HEK293 (cell line): ENCODE measurements at regions of chr11 and their contacts with region 1.

Region 1: DNA sequence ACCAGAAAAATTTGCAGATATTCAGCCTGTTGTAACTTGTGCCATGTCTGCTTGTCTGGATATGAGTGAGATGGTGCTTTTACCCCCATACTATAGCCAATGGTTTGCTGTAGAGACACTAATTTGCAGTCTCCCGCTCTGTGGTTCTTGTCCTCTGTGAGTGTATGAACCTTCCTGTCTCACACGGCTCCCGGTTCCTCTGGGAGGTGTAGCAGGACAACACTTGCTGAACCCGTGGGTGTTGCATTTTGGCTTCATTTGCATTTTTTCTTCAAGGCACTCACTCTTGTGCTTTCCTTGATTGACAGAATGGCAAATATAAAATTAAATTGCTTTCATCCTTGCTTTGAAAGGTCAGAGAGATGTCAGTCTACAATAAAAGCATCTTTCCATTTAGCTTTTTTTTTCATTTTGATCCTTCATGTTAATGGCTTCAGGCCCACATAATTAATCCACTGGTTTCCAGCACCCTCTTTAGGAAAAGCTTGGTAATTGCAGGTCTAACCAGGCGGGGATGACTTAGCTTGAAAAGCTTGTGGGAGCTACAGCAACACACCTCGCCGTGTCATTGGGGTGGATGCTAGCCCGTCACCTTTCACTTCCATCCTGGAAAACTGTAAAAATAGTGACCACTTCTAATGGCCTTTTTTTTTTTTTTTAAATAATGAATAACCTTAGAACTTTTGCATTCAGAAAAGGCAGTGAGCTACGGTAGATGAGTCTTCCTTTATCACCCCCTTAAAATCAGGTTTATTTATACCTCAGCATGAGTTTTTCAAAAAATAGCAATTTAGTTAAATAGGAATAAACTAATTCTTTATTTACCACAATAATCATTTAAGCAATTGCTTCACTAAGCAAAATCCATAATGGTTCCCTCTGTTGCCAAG is 27.4 kb upstream of the ST14 start:
- H3K4me3 ChIP-seq: no peak overlapping the region
- H3K27ac ChIP-seq: no peak overlapping the region
- H3K4me1 ChIP-seq: no peaks in the 10 kb centered on the region
- CTCF ChIP-seq: peak; percentile 32; the same call in 1 of the 2 replicates

Region 2: DNA sequence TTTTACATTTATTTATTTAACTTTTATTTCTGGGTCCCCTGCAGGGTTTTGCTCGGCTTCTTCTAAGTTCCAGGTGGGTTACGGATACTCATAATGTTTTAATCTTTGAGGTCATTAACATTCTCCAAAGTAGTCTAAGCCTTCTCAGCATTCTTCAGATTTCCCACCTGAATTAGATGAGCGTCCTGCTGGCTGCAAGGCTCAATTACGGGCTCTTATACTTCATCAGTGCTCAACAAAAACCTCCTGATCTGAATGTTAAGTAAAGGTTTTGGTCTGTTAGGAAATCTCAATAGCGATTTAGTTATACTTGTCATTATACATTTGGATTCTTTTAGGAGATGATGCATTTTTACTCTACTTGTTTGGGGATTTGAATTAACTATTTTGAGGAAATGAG is 209.5 kb before region 1 on chr11:
- CTCF ChIA-PET with region 1: interaction called, 118 read pairs
- POLR2A ChIA-PET with region 1: no interaction called
- H3K4me3 ChIP-seq: no peak overlapping the region
- H3K27ac ChIP-seq: no peak overlapping the region
- H3K4me1 ChIP-seq: no peaks in the 10 kb centered on the region
- CTCF ChIP-seq: no peak

Region 3: GRCh38 chr11:129992161-129992944 is 139.9 kb before region 1 on chr11:
- CTCF ChIA-PET with region 1: interaction called, 27 read pairs
- POLR2A ChIA-PET with region 1: no interaction called
- H3K4me3 ChIP-seq: no peak overlapping the region
- H3K27ac ChIP-seq: no peak overlapping the region
- H3K4me1 ChIP-seq: peaks cover 10% of the 10 kb centered on the region; the same call in 1 of the 2 replicates
- CTCF ChIP-seq: peak; percentile 37; the same call in 1 of the 2 replicates

Region 4: DNA sequence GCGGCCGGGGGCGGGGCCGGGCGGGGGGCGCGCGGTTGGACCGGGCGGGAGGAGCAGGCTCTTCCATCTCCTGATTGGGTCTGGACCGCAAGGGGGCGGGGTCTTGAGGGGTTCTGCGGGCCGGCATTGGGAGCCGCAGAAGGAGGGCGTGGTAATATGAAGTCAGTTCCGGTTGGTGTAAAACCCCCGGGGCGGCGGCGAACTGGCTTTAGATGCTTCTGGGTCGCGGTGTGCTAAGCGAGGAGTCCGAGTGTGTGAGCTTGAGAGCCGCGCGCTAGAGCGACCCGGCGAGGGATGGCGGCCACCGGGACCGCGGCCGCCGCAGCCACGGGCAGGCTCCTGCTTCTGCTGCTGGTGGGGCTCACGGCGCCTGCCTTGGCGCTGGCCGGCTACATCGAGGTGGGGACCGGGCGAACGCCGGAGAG is 62.5 kb before region 1 on chr11 and contains the start of gene APLP2:
- CTCF ChIA-PET with region 1: interaction called, 7 read pairs
- POLR2A ChIA-PET with region 1: interaction called, 13 read pairs
- H3K4me3 ChIP-seq: peak within 1 kb of the TSS; percentile 93
- H3K27ac ChIP-seq: peak within 1 kb of the TSS; percentile 91
- H3K4me1 ChIP-seq: no peaks in the 10 kb centered on the region
- CTCF ChIP-seq: no peak

Region 5: GRCh38 chr11:130118636-130119387 is 13.4 kb before region 1 on chr11:
- CTCF ChIA-PET with region 1: interaction called, 11 read pairs
- POLR2A ChIA-PET with region 1: no interaction called
- H3K4me3 ChIP-seq: no peak overlapping the region
- H3K27ac ChIP-seq: no peak overlapping the region
- H3K4me1 ChIP-seq: peaks cover 3% of the 10 kb centered on the region; the same call in 1 of the 2 replicates
- CTCF ChIP-seq: no peak